ENCODE measurements at regions of chr17 and their contacts with region 1.

Region 1: DNA sequence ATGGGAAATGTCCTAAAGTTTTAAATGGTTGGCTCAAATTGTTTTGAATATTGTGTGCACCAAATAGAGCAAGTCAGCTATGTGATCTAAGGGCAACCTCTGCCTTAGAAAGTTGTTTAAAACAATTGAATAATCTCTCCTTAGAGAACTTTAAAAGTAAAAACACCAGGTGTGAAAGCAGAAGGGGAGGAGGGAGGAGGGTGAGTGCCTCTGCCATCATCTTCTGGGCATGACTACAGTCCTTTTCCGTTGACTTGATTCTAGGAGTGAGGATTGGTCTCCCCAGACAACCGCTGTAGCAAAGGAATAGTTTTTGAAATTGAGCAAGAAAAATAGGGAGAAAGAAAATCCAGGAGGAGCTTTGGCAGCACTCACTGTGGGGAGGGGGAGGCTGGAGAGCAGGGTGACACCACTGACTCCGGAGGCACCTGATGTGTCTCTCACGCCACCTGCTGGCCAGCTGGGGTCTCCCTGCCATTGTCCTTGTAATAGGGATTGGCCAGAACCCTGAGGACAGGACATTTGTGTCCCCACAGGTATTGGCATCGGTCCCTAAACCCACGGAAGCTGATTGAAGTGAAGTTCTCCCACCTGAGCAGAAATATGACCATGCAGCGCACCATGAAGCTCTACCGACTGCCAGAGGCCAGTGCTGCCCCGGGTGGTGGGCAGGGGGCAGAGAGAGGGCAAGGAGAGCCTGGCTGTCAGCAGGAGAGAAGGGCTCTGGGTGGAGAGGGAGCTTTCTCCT is 33.3 kb downstream of the PLCD3 start:
- DNase-seq: no peak
- H3K4me3 ChIP-seq: no peak overlapping the region
- CTCF ChIP-seq: peak; percentile 89

Region 2: GRCh38 chr17:44919885-44920564 is 179.0 kb before region 1 on chr17:
- CTCF ChIA-PET with region 1: interaction called, 88 read pairs
- POLR2A ChIA-PET with region 1: no interaction called
- DNase-seq: no peak
- H3K4me3 ChIP-seq: no peak overlapping the region
- CTCF ChIP-seq: peak; percentile 94

Region 3: DNA sequence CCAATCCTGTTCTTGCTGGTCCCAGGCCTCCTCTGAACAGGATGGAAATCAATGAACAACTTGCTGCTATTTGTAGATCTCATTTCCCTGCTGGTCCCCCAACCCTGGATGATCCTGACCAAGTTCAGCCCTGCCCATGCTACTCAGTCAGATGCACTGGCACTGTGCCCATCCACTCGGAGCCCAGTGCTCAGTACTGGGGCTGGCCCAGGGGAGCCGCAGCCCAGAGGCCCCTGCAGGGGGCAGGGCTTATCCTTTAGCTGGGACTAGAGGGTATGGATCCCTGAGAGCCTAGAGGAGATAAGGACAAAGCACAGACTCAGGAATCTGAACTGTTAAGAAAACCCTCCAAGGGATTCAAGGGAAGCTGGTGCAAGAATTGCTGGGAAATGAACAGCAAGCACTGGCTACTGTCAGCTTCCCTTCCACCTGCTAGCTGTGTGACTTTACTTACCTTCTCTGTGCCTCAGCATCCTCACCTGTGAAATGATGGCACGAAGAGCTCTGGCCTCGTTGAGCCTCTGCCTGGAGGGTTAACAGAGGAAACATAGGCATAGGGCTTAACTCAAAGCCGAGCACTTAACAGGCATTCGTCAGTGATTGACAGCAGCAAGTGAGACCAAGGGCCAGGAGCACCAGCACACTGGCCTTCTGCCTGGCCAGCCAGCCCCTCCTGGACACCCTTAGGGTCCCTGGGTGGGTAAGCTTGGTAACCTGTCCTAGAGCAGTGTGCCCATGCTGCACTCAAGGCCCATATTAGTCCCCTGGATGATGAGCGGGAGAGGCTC is 101.1 kb before region 1 on chr17:
- CTCF ChIA-PET with region 1: no interaction called
- POLR2A ChIA-PET with region 1: no interaction called
- DNase-seq: no peak
- H3K4me3 ChIP-seq: no peak overlapping the region
- CTCF ChIP-seq: no peak

Region 4: GRCh38 chr17:45051060-45051719 is 47.9 kb before region 1 on chr17 and contains the start of gene DCAKD:
- CTCF ChIA-PET with region 1: interaction called, 11 read pairs
- POLR2A ChIA-PET with region 1: no interaction called
- DNase-seq: peak; percentile 65
- H3K4me3 ChIP-seq: peak within 1 kb of the TSS; percentile 66
- CTCF ChIP-seq: peak; percentile 11

Region 5: GRCh38 chr17:45073414-45074070 is 25.5 kb before region 1 on chr17:
- CTCF ChIA-PET with region 1: interaction called, 72 read pairs
- POLR2A ChIA-PET with region 1: no interaction called
- DNase-seq: peak; percentile 77
- H3K4me3 ChIP-seq: no peak overlapping the region
- CTCF ChIP-seq: no peak

Region 6: DNA sequence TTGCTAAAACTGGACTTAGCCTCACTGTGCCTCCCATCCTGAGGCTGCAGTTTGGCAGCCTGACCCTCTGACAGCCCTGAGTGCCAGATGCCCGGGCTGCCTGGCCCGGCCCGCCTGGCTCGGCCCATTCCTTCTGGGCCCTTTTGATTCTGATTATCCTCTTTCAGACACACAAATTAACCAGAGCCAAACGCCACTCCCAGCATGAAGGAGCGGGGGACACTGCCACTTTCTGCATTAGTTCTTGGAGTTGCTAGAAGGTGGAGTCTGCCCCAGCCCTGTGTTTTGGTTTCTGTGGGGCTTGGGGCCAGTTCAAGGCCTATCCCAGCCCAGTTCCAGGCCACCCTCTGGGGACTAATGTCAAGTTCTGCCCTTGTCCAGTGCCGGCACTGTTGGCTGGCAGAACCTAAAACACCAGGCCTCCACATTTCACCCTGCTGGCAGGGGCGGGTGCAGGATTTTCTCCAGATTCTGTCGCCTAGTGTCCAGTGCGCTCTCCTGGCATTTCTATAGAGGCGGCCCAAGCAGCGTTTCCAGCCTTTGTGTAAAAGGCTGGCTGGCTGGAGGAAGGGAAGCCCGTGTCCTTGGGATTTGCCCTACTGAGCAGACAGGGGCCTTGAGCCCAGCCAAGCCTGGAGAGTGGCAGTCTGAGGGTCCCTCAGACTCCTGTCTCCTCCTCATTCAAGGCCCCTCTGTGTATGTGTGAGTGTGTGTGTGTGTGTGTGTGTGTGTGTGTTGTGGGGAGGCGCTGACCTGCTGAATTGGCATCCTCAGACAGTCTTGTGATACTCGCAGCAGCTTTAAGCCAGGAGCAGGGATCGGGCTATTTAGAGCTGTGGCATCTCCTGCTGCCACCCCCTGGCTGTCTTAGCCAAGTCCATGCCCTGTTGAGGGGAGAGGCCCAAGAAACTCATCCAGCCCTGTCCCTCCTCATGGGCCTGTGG is 11.9 kb after region 1 on chr17:
- CTCF ChIA-PET with region 1: interaction called, 123 read pairs
- POLR2A ChIA-PET with region 1: interaction called, 7 read pairs
- DNase-seq: no peak
- H3K4me3 ChIP-seq: no peak overlapping the region
- CTCF ChIP-seq: no peak

Region 7: DNA sequence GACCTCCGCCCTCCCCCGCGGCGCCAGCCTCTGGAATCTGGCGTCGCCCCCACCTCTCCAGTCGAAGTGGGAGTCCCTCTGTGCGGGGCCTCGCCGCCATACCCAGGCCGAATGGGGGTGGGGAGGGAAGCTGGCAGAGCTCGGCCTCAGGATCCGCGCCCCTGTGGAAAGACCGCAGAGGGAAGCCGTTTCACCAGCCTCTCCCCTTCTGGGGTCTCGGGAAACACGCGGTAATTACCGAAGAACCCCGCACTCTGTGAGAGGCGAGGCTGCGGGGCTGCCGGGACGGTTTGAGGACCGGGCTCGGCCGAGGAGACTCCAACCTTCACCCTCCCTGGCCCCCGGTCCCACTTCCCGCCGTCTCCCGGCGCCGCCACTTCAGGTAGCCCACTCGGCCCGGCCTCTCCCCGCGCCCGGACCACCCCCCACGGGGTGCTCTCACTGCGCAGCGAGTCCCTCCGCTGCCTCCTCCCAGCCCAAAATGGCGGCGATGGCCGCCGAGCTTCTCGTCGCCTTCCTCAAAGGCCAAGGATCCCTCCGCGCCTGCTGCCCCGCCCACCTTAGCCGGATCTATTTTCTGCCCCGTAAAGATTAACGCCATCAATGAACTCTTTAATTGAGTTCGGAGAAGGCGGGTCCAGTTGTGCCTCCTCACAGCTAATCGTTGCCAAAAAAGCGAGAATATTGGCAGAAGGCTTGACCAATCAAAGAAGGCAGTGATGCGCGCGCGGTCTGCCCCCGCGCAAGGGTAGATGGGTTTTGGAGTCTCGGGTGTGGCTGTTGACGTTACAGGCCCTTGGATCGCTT is 62.2 kb after region 1 on chr17:
- CTCF ChIA-PET with region 1: no interaction called
- POLR2A ChIA-PET with region 1: no interaction called
- DNase-seq: peak; percentile 100
- H3K4me3 ChIP-seq: peak overlapping the region; percentile 92
- CTCF ChIP-seq: no peak